ENCODE measurements at regions of chr16 and their contacts with region 1.

Region 1: GRCh38 chr16:89319883-89320781 is 102.6 kb downstream of the ZNF778 start:
- DNase-seq: no peak
- H3K4me3 ChIP-seq: no peak overlapping the region
- H3K4me3 Mint-ChIP-seq: peak overlapping the region in 7 of 8 donors; percentile 48 to 77 (median 68)
- H3K27ac ChIP-seq: no peak overlapping the region
- H3K27ac Mint-ChIP-seq: peak overlapping the region in 6 of 7 donors; percentile 55 to 98 (median 74)
- H3K4me1 ChIP-seq: peaks cover 99% of the 10 kb centered on the region
- H3K4me1 Mint-ChIP-seq: peaks cover 72 to 96% (median 89%) of the 10 kb centered on the region in 4 donors
- H3K27me3 ChIP-seq: no peaks in the 10 kb centered on the region
- H3K27me3 Mint-ChIP-seq: no peaks in the 10 kb centered on the region

Region 2: GRCh38 chr16:88870608-88871348 is 449.4 kb before region 1 on chr16:
- CTCF ChIA-PET with region 1: no interaction called
- POLR2A ChIA-PET with region 1: no interaction called
- intact Hi-C with region 1: no loop called
- DNase-seq: no peak
- H3K4me3 ChIP-seq: no peak overlapping the region
- H3K4me3 Mint-ChIP-seq: peak overlapping the region in 6 of 8 donors; percentile 8 to 52 (median 44)
- H3K27ac ChIP-seq: no peak overlapping the region
- H3K27ac Mint-ChIP-seq: no peak overlapping the region
- H3K4me1 ChIP-seq: no peaks in the 10 kb centered on the region
- H3K4me1 Mint-ChIP-seq: peaks cover 0 to 3% (median under 1%) of the 10 kb centered on the region in 4 donors
- H3K27me3 ChIP-seq: no peaks in the 10 kb centered on the region
- H3K27me3 Mint-ChIP-seq: peaks cover 6 to 11% of the 10 kb centered on the region in 2 donors

Region 3: GRCh38 chr16:89289428-89290395 is 30.4 kb before region 1 on chr16:
- CTCF ChIA-PET with region 1: interaction called, 16 read pairs
- POLR2A ChIA-PET with region 1: interaction called, 4 read pairs
- intact Hi-C with region 1: no loop called
- DNase-seq: peak; percentile 54 to 65 (median 61)
- H3K4me3 ChIP-seq: no peak overlapping the region
- H3K4me3 Mint-ChIP-seq: no peak overlapping the region
- H3K27ac ChIP-seq: peak overlapping the region; percentile 7
- H3K27ac Mint-ChIP-seq: peak overlapping the region in 5 of 7 donors; percentile 54 to 80 (median 69)
- H3K4me1 ChIP-seq: peaks cover 4% of the 10 kb centered on the region
- H3K4me1 Mint-ChIP-seq: peaks cover 6 to 17% (median 10%) of the 10 kb centered on the region in 4 donors
- H3K27me3 ChIP-seq: no peaks in the 10 kb centered on the region
- H3K27me3 Mint-ChIP-seq: no peaks in the 10 kb centered on the region

Region 4: DNA sequence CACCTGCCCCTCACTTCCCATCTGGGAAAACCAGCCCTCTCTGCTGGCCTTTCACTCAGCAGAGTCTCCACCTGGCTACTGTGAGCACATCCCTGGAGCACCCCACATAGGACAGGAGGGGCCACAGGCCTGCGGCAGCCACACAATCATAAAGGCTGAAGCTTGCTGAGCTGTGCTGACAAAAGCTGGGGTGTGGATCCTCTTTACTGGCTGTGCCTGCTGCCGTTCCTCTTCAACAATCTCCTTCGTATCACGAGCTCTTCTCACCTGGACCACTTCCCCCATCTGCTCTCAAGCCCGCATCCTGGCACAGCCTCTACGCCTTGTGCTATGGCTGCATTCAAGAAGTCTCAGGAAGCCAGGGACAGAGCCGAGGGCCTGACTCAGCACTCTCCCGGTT is 16.5 kb before region 1 on chr16:
- CTCF ChIA-PET with region 1: no interaction called
- POLR2A ChIA-PET with region 1: interaction called, 10 read pairs
- intact Hi-C with region 1: no loop called
- DNase-seq: peak in 1 of 5 donors; percentile 41
- H3K4me3 ChIP-seq: no peak overlapping the region
- H3K4me3 Mint-ChIP-seq: peak overlapping the region in 1 of 8 donors; percentile 50
- H3K27ac ChIP-seq: no peak overlapping the region
- H3K27ac Mint-ChIP-seq: peak overlapping the region in 3 of 7 donors; percentile 1 to 87 (median 26)
- H3K4me1 ChIP-seq: peaks cover 36% of the 10 kb centered on the region
- H3K4me1 Mint-ChIP-seq: peaks cover 27 to 55% (median 35%) of the 10 kb centered on the region in 4 donors
- H3K27me3 ChIP-seq: no peaks in the 10 kb centered on the region
- H3K27me3 Mint-ChIP-seq: no peaks in the 10 kb centered on the region

Region 5: DNA sequence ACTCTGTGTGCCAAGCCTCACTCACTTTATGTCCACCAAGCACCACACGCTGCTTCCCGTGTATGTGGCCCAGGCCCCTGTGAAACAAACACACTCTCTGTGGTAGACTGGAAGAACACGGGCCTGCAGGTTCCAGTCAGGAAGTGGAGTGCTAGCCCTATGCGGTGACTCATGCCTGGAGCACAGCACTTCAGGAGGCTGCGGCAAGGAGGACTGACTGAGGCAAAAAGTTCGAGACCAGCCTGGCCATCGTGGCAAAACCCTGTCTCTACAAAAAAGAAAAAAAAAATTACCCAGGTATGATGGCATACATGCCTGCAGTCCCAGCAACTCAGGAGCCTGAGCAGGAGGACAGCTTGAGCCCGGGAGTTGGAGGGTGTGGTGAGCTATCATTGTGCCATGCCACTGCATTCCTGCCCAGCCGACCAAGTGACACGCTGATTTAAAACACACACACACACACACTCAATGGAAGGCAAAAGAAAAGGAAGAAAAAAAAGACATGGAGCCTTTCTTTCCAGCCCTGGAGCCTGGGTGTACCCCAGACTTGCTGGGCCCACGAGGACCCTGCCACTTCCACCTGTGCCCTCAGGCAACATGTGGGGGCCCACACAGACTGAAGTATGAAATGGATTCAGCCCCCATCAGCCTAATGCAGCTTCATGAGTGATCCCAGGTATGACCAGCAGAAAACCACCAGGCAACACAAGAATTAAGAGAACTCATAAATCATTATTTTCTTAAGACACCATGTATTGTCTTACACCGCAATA is 43.7 kb after region 1 on chr16:
- CTCF ChIA-PET with region 1: interaction called, 4 read pairs
- POLR2A ChIA-PET with region 1: interaction called, 13 read pairs
- intact Hi-C with region 1: loop called (anchors 1 kb)
- DNase-seq: peak in 4 of 5 donors; percentile 22 to 83 (median 28)
- H3K4me3 ChIP-seq: no peak overlapping the region
- H3K4me3 Mint-ChIP-seq: peak overlapping the region; percentile 22 to 76 (median 64)
- H3K27ac ChIP-seq: peak overlapping the region; percentile 26
- H3K27ac Mint-ChIP-seq: peak overlapping the region; percentile 85 to 92 (median 90)
- H3K4me1 ChIP-seq: peaks cover 85% of the 10 kb centered on the region
- H3K4me1 Mint-ChIP-seq: peaks cover 62 to 99% (median 82%) of the 10 kb centered on the region in 4 donors
- H3K27me3 ChIP-seq: no peaks in the 10 kb centered on the region
- H3K27me3 Mint-ChIP-seq: no peaks in the 10 kb centered on the region

Region 6: GRCh38 chr16:89484923-89485679 is 165.0 kb after region 1 on chr16:
- CTCF ChIA-PET with region 1: no interaction called
- POLR2A ChIA-PET with region 1: interaction called, 27 read pairs
- intact Hi-C with region 1: loop called (anchors 5 kb)
- DNase-seq: peak in 2 of 5 donors; percentile 19 to 56
- H3K4me3 ChIP-seq: peak overlapping the region in 1 of 2 donors; percentile 6
- H3K4me3 Mint-ChIP-seq: peak overlapping the region; percentile 72 to 92 (median 84)
- H3K27ac ChIP-seq: peak overlapping the region; percentile 42
- H3K27ac Mint-ChIP-seq: peak overlapping the region; percentile 86 to 98 (median 94)
- H3K4me1 ChIP-seq: peaks cover 89% of the 10 kb centered on the region
- H3K4me1 Mint-ChIP-seq: peaks cover 70 to 91% (median 81%) of the 10 kb centered on the region in 4 donors
- H3K27me3 ChIP-seq: no peaks in the 10 kb centered on the region
- H3K27me3 Mint-ChIP-seq: no peaks in the 10 kb centered on the region

Region 7: DNA sequence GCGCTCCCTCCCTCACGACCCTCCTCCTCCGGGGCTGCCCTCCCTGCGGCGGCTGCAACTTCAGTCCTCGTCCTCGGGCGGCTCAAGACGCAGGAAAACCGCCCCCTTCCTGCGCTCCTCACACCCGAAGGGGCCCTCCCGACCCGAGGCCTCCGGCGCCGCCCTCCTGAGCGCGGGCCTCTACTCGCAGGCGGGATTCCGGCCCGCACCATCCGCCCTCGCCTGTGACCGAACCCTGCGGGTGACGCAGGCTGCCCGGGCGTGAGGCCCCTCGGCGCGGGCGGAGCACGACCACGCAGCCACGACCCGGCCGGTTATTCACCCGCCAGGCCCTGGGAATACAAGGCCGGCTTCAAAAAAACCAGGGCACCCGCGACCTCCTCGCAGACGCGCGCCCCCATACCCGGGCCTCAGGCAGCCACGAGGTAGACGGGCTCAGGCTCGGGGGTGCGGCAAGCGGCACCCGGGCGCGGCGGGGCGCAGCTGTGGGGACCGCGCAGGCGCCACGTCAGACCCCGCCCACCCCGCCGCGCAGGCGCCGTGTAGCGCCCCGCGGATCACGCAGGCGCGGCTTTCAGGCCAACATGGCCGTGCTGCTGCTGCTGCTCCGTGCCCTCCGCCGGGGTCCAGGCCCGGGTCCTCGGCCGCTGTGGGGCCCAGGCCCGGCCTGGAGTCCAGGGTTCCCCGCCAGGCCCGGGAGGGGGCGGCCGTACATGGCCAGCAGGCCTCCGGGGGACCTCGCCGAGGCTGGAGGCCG is 187.9 kb after region 1 on chr16 and contains the start of gene SPG7:
- CTCF ChIA-PET with region 1: interaction called, 4 read pairs
- POLR2A ChIA-PET with region 1: interaction called, 39 read pairs
- intact Hi-C with region 1: no loop called
- DNase-seq: peak; percentile 85 to 96 (median 93)
- H3K4me3 ChIP-seq: peak within 1 kb of the TSS; percentile 76
- H3K4me3 Mint-ChIP-seq: peak within 1 kb of the TSS; percentile 89 to 97 (median 94)
- H3K27ac ChIP-seq: peak within 1 kb of the TSS; percentile 83
- H3K27ac Mint-ChIP-seq: peak within 1 kb of the TSS; percentile 85 to 98 (median 96)
- H3K4me1 ChIP-seq: peaks cover 40% of the 10 kb centered on the region
- H3K4me1 Mint-ChIP-seq: peaks cover 18 to 53% (median 32%) of the 10 kb centered on the region in 4 donors
- H3K27me3 ChIP-seq: no peaks in the 10 kb centered on the region
- H3K27me3 Mint-ChIP-seq: no peaks in the 10 kb centered on the region
- total RNA-seq, gene SPG7: 157 to 160 TPM